Astrocyte of the cerebellum (primary cell): ENCODE measurements at regions of chr16 and their contacts with region 1.

Region 1: DNA sequence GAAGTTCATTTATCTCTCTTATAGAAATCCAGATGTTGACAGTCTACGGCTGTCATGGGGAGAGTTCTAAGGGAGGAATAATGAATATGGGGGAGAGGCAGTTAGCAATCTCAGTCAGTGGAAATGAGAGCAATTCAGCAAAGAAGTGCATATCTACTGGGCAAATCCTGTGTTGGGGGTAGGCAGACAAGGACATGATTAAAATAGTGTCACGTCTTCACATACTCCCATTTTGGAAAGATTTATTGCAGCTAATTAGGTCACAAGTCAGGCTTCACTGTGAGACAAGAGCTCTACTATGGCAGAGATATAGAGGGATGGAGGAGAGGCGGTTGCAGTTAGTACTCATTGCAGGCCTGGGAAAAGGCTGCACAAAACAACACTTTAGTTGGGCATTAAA is 29.8 kb downstream of the LRRC36 start:
- DNase-seq: no peak
- H3K4me3 ChIP-seq: no peak overlapping the region
- CTCF ChIP-seq: no peak

Region 2: GRCh38 chr16:67447508-67448076 is 91.2 kb after region 1 on chr16:
- in situ Hi-C with region 1: loop called (anchors 10 kb)
- DNase-seq: no peak
- H3K4me3 ChIP-seq: no peak overlapping the region
- CTCF ChIP-seq: peak; percentile 45

Region 3: GRCh38 chr16:67530013-67530939 is 173.9 kb after region 1 on chr16:
- in situ Hi-C with region 1: no loop called
- DNase-seq: no peak
- H3K4me3 ChIP-seq: peak overlapping the region; percentile 79
- CTCF ChIP-seq: no peak

Region 4: GRCh38 chr16:67561824-67562525 is 205.6 kb after region 1 on chr16:
- in situ Hi-C with region 1: no loop called
- DNase-seq: peak; percentile 88
- H3K4me3 ChIP-seq: peak overlapping the region; percentile 87
- CTCF ChIP-seq: no peak